HEK293 (cell line): ENCODE measurements at regions of chr1 and their contacts with region 1.

Region 1: GRCh38 chr1:240004086-240004749 is 87.5 kb upstream of the FMN2 start:
- H3K4me3 ChIP-seq: no peak overlapping the region
- H3K27ac ChIP-seq: no peak overlapping the region
- H3K4me1 ChIP-seq: peaks cover 6% of the 10 kb centered on the region
- CTCF ChIP-seq: 0 out of 2 replicates have a peak, but pooled peaks have one; percentile 60

Region 2: GRCh38 chr1:239976130-239976968 is 27.9 kb before region 1 on chr1:
- CTCF ChIA-PET with region 1: interaction called, 10 read pairs
- POLR2A ChIA-PET with region 1: no interaction called
- H3K4me3 ChIP-seq: no peak overlapping the region
- H3K27ac ChIP-seq: no peak overlapping the region
- H3K4me1 ChIP-seq: no peaks in the 10 kb centered on the region
- CTCF ChIP-seq: peak; percentile 54

Region 3: GRCh38 chr1:240021709-240022108 is 17.5 kb after region 1 on chr1:
- CTCF ChIA-PET with region 1: interaction called, 27 read pairs
- POLR2A ChIA-PET with region 1: no interaction called
- H3K4me3 ChIP-seq: no peak overlapping the region
- H3K27ac ChIP-seq: no peak overlapping the region
- H3K4me1 ChIP-seq: no peaks in the 10 kb centered on the region
- CTCF ChIP-seq: no peak